CD8-positive, alpha-beta T cell (primary cell): ENCODE measurements at regions of chr6 and their contacts with region 1.

Region 1: GRCh38 chr6:42547407-42548329 is 16.2 kb upstream of the UBR2 start:
- DNase-seq: peak; percentile 76 to 94 (median 85)
- ATAC-seq: peak; percentile 99
- H3K4me3 ChIP-seq: peak overlapping the region; percentile 19 to 36
- H3K4me3 Mint-ChIP-seq: peak overlapping the region; percentile 67
- H3K27ac ChIP-seq: no peak overlapping the region
- H3K27ac Mint-ChIP-seq: no peak overlapping the region
- H3K4me1 ChIP-seq: peaks cover 3% of the 10 kb centered on the region
- H3K4me1 Mint-ChIP-seq: peaks cover 11% of the 10 kb centered on the region
- H3K27me3 ChIP-seq: no peaks in the 10 kb centered on the region
- H3K27me3 Mint-ChIP-seq: peaks cover 3% of the 10 kb centered on the region
- CTCF ChIP-seq: peak; percentile 96

Region 2: GRCh38 chr6:42075159-42075838 is 472.4 kb before region 1 on chr6:
- CTCF ChIA-PET with region 1: no interaction called
- POLR2A ChIA-PET with region 1: no interaction called
- intact Hi-C with region 1: loop called in 1 of 2 experiments (anchors 2 kb)
- DNase-seq: peak; percentile 6 to 64 (median 47)
- ATAC-seq: no peak
- H3K4me3 ChIP-seq: no peak overlapping the region
- H3K4me3 Mint-ChIP-seq: no peak overlapping the region
- H3K27ac ChIP-seq: no peak overlapping the region
- H3K27ac Mint-ChIP-seq: peak overlapping the region; percentile 18
- H3K4me1 ChIP-seq: no peaks in the 10 kb centered on the region
- H3K4me1 Mint-ChIP-seq: peaks cover 5% of the 10 kb centered on the region
- H3K27me3 ChIP-seq: no peaks in the 10 kb centered on the region
- H3K27me3 Mint-ChIP-seq: no peaks in the 10 kb centered on the region
- CTCF ChIP-seq: peak; percentile 49

Region 3: GRCh38 chr6:42260972-42261371 is 286.7 kb before region 1 on chr6:
- CTCF ChIA-PET with region 1: interaction called, 105 read pairs
- POLR2A ChIA-PET with region 1: interaction called, 3 read pairs
- intact Hi-C with region 1: loop called (anchors 1 kb)
- DNase-seq: peak in 6 of 9 experiments; percentile 35 to 70 (median 53)
- ATAC-seq: peak; percentile 81
- H3K4me3 ChIP-seq: no peak overlapping the region
- H3K4me3 Mint-ChIP-seq: no peak overlapping the region
- H3K27ac ChIP-seq: no peak overlapping the region
- H3K27ac Mint-ChIP-seq: peak overlapping the region; percentile 45
- H3K4me1 ChIP-seq: peaks cover 3% of the 10 kb centered on the region
- H3K4me1 Mint-ChIP-seq: peaks cover 12% of the 10 kb centered on the region
- H3K27me3 ChIP-seq: no peaks in the 10 kb centered on the region
- H3K27me3 Mint-ChIP-seq: no peaks in the 10 kb centered on the region
- CTCF ChIP-seq: peak; percentile 49

Region 4: DNA sequence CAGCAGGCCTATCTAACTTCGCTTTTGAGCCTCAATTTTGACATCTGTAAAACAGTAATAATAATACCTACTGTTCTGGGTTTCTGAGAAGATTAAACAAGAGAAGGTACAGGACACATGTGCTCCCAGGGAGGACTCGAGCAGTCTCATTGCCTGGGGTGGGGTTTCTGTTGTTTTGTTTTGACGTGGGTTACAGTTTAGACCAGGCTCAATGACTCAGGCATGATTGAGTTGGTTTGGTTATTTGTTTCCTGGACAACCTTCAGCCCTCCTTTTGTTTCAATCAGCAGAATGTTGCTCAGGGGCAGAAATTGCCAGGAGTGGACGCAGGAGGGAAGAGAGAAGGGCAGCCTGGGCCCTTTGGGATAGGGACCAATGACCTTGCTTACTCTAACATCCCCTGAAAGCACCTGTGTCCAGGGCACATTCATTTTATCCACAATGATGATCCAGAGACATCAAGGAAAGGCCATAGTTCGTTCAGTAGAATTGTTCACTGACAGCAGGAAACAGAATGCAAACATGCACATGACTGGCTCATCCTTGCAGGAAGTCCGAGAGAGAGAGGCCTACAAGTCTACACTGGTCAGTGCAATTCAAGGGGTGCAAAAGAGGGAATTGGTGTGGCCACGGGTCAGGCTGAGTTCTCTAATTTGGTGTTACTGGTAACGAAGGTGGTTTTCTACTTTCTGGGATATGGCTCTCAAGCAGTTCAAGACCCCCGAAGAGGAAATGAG is 255.5 kb before region 1 on chr6:
- CTCF ChIA-PET with region 1: interaction called, 11 read pairs
- POLR2A ChIA-PET with region 1: interaction called, 3 read pairs
- intact Hi-C with region 1: no loop called
- DNase-seq: peak in 4 of 9 experiments; percentile 32 to 61 (median 42)
- ATAC-seq: peak; percentile 53
- H3K4me3 ChIP-seq: no peak overlapping the region
- H3K4me3 Mint-ChIP-seq: no peak overlapping the region
- H3K27ac ChIP-seq: peak overlapping the region in 1 of 2 experiments; percentile 65
- H3K27ac Mint-ChIP-seq: peak overlapping the region; percentile 72
- H3K4me1 ChIP-seq: peaks cover 52% of the 10 kb centered on the region
- H3K4me1 Mint-ChIP-seq: peaks cover 70% of the 10 kb centered on the region
- H3K27me3 ChIP-seq: no peaks in the 10 kb centered on the region
- H3K27me3 Mint-ChIP-seq: no peaks in the 10 kb centered on the region
- CTCF ChIP-seq: no peak

Region 5: GRCh38 chr6:42313941-42314570 is 233.6 kb before region 1 on chr6:
- CTCF ChIA-PET with region 1: interaction called, 30 read pairs
- POLR2A ChIA-PET with region 1: no interaction called
- intact Hi-C with region 1: loop called (anchors 1 kb)
- DNase-seq: peak in 1 of 9 experiments; percentile 41
- ATAC-seq: no peak
- H3K4me3 ChIP-seq: no peak overlapping the region
- H3K4me3 Mint-ChIP-seq: no peak overlapping the region
- H3K27ac ChIP-seq: peak overlapping the region in 1 of 2 experiments; percentile 10
- H3K27ac Mint-ChIP-seq: peak overlapping the region; percentile 68
- H3K4me1 ChIP-seq: peaks cover 15% of the 10 kb centered on the region
- H3K4me1 Mint-ChIP-seq: peaks cover 50% of the 10 kb centered on the region
- H3K27me3 ChIP-seq: no peaks in the 10 kb centered on the region
- H3K27me3 Mint-ChIP-seq: no peaks in the 10 kb centered on the region
- CTCF ChIP-seq: no peak

Region 6: DNA sequence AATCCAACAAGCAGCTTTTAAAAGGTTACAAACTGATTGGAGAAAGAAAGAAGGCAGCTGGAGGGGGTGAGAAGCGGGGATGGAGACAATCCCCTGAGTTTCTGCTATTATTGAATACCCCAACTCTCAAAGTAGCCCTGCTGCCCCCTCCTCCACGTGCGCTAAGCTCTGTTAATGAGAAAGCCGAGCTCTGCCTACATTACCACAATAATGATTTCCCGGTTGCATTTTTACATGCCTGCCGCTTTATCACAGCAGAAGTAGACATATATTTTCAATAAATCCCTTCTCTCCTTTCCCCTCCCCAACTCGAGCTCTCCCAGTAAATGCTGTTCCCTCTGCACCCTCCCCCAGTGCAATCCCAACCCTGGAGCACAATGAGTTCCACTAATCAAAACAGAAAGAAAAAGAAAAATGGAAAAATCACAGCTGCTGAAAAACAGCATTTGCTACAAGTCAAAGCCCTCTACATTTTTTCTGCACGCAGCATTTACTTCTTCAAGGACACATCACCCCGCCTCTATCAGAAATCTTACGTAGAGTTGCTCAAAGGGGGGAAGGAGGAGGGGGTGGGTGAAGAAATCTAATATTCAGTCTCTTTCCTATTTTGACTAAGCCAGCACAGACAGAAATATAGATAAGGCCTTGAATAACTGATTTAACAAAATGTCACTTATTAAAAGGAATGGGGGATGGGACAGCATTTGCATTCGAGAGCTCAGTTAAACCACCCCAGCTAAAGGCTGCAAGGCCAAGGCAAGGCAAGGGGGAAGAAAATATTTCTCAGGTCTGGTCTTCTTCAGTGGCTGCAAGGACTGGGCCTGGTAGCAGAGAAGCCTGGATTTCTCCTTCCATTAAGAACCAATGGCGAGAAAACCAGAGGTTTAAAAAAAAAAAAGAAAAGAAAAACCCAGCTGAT is 106.6 kb before region 1 on chr6:
- CTCF ChIA-PET with region 1: interaction called, 10 read pairs
- POLR2A ChIA-PET with region 1: no interaction called
- intact Hi-C with region 1: no loop called
- DNase-seq: peak in 1 of 9 experiments; percentile 31
- ATAC-seq: peak; percentile 55
- H3K4me3 ChIP-seq: no peak overlapping the region
- H3K4me3 Mint-ChIP-seq: peak overlapping the region; percentile 38
- H3K27ac ChIP-seq: peak overlapping the region in 1 of 2 experiments; percentile 30
- H3K27ac Mint-ChIP-seq: peak overlapping the region; percentile 79
- H3K4me1 ChIP-seq: peaks cover 40% of the 10 kb centered on the region
- H3K4me1 Mint-ChIP-seq: peaks cover 74% of the 10 kb centered on the region
- H3K27me3 ChIP-seq: no peaks in the 10 kb centered on the region
- H3K27me3 Mint-ChIP-seq: no peaks in the 10 kb centered on the region
- CTCF ChIP-seq: no peak

Region 7: GRCh38 chr6:42537536-42537935 is 10.1 kb before region 1 on chr6:
- CTCF ChIA-PET with region 1: interaction called, 25 read pairs
- POLR2A ChIA-PET with region 1: no interaction called
- intact Hi-C with region 1: loop called in 1 of 2 experiments (anchors 1 kb)
- DNase-seq: no peak
- ATAC-seq: no peak
- H3K4me3 ChIP-seq: no peak overlapping the region
- H3K4me3 Mint-ChIP-seq: no peak overlapping the region
- H3K27ac ChIP-seq: no peak overlapping the region
- H3K27ac Mint-ChIP-seq: no peak overlapping the region
- H3K4me1 ChIP-seq: no peaks in the 10 kb centered on the region
- H3K4me1 Mint-ChIP-seq: no peaks in the 10 kb centered on the region
- H3K27me3 ChIP-seq: no peaks in the 10 kb centered on the region
- H3K27me3 Mint-ChIP-seq: no peaks in the 10 kb centered on the region
- CTCF ChIP-seq: no peak